ENCODE measurements at regions of chr2 and their contacts with region 1.

Region 1: DNA sequence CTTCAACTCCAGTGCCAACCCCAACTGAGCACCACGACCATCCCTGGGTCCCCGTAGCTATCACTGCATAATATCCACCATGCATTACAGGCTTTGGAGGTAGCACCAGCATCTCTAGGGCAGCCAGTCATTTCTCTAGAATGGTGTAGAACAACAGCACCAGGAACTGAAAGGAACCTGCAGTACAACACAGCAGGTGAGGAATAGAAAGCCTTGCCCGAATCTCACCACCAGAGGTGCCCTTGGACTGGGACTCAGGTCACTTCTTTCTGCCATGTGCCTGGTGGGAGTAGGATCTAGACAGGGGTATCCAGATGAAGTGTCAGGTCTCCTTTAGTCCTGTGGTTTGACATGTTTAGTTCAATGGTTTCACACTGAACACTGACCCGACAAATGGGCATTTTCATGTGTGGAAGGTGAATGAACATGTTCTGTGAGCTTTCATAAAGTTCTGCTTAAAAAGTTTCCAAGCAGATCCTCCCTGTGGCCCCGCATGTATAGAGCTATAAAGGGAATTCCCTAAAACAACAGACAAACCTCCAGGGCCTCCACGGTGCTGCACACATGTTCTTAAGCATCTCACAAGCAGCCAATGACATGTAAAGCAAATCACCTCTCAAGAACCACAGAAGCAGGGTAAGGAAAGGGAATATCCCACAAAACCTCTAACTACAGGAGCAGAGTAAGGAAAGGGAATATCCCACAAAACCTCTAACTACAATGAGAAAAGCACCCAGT is 208.3 kb downstream of the AFF3 start:
- DNase-seq: no peak
- ATAC-seq: no peak
- H3K4me3 ChIP-seq: no peak overlapping the region
- H3K27ac ChIP-seq: no peak overlapping the region
- H3K4me1 ChIP-seq: no peaks in the 10 kb centered on the region
- H3K27me3 ChIP-seq: no peaks in the 10 kb centered on the region
- CTCF ChIP-seq: no peak

Region 2: DNA sequence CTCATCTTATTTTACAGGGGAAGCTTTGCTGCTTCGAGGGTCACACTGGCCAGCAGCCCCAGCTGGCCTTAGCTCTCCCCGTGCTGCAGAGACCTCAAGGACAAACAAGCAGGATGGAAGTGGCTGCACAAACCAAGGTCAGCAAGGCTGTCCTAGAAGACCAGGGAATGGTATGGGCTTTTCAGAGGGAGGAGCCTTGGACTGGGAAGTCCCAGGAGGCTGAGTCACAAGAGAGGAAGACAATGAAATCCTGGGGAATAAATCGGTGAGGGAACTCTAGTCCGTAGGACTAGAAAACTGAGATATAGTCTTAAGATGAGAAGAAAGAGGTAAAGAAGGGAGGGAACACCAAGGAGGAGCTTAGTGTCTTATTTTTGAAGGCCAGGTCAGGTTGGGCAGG is 1437.6 kb after region 1 on chr2:
- intact Hi-C with region 1: loop called in 1 of 2 experiments (anchors 10 kb)
- DNase-seq: no peak
- ATAC-seq: no peak
- H3K4me3 ChIP-seq: no peak overlapping the region
- H3K27ac ChIP-seq: no peak overlapping the region
- H3K4me1 ChIP-seq: no peaks in the 10 kb centered on the region
- H3K27me3 ChIP-seq: no peaks in the 10 kb centered on the region
- CTCF ChIP-seq: no peak